ENCODE measurements at regions of chr1 and their contacts with region 1.

Region 1: GRCh38 chr1:202810615-202811295 is at the start of gene PCAT6:
- DNase-seq: peak; percentile 92 to 96 (median 95)
- H3K4me3 ChIP-seq: peak within 1 kb of the TSS; percentile 57 to 99 (median 87)
- H3K27ac ChIP-seq: peak within 1 kb of the TSS in 58 of 59 donors; percentile 5 to 94 (median 81)
- H3K27me3 ChIP-seq: no peaks in the 10 kb centered on the region
- CTCF ChIP-seq: peak in 26 of 56 donors; percentile 6 to 53 (median 21)
- total RNA-seq, gene PCAT6: 0.81 to 10.0 (median 2.3) TPM in 113 of 120 experiments, not detected in the others

Region 2: DNA sequence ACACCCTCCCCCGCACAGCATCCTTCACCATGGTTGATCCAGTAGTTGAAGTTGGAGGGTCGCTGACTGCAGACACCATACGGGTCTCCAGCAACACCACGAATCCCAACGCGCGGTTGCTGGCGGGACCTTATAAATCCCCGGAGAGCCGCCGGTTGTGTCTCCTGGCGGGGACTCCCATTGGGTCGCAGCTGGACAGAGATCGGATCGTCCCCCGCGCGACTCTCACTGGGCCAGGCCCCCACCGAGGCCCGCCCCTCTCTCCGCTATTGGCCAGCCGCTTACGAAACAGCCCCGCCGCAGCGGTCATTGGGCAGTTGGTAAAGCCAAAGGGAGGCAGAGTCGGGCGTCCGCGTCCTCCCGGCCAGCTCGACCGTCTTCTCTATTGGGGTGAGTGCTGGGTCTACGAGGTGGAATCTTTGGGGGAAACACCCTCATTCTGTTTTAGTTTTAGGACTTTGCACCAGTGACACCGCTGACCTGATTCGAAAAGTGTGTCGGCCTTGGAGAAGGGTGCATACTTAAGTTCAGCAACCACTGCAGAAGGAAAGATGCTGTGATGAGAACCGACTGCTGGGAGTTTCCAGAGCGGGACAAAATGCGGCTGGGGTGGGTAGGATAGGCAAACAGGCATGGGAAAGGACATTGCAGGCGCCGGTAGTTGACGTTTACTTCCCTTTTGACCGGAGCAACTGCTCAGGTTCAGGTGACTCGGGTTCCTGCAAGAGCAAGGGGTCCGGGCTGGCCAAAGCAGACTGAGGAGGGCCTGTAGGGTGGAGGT is 50.9 kb after region 1 on chr1:
- intact Hi-C with region 1: loop called (anchors 2 to 5 kb)
- DNase-seq: peak; percentile 89 to 97 (median 94)
- H3K4me3 ChIP-seq: peak overlapping the region; percentile 61 to 92 (median 79)
- H3K27ac ChIP-seq: peak overlapping the region in 33 of 59 donors; percentile 0 to 78 (median 43)
- H3K27me3 ChIP-seq: no peaks in the 10 kb centered on the region
- CTCF ChIP-seq: peak in 22 of 56 donors; percentile 1 to 49 (median 16)

Region 3: GRCh38 chr1:202888531-202889360 is 78.0 kb after region 1 on chr1 and contains the start of gene RABIF:
- intact Hi-C with region 1: loop called (anchors 2 kb)
- DNase-seq: peak; percentile 92 to 97 (median 96)
- H3K4me3 ChIP-seq: peak within 1 kb of the TSS; percentile 55 to 98 (median 89)
- H3K27ac ChIP-seq: peak within 1 kb of the TSS; percentile 81 to 100 (median 97)
- H3K27me3 ChIP-seq: no peaks in the 10 kb centered on the region
- CTCF ChIP-seq: peak in 40 of 56 donors; percentile 7 to 58 (median 36)
- total RNA-seq, gene RABIF: 9.4 to 26.6 (median 17.3) TPM

Region 4: DNA sequence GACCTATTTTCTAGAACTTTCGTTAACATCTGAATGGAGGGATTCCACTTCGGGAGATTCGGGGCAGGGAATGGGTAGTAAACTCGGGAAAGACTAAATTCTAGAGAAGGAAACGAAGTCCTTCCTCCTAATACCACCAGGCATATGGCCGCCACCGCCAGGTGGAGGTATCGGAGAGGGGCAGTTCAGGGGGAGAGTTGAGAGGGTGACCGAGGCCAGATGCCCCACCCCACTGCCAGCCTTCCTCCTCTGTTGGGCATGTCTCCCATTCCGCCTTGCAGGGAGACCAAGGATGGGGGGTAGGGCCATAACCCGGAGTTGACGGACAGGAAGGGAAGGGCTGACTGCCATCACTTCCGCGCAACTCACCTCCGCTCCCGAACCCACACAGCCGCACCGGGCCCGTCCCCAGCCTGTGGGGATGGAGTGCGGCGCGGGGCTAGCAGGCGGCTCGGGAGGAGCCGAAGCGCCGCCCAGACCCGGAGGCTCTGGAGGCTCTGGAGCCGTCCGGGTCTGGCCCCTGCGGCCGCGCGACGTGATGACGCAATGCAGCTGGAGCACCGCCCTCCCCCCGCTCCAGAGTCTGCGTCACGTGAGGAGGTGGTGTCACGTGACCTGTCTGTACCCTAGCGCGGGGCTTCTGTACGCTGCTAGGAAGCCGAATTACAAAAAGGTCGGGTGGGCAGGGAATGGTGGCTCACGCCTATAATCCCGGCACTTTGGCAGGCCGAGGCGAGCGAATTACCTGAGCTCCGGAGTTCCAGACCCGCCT is 116.2 kb after region 1 on chr1 and contains the start of gene KLHL12:
- intact Hi-C with region 1: loop called in 1 of 2 experiments (anchors 10 kb)
- DNase-seq: peak; percentile 93 to 99 (median 96)
- H3K4me3 ChIP-seq: peak within 1 kb of the TSS; percentile 55 to 99 (median 93)
- H3K27ac ChIP-seq: peak within 1 kb of the TSS; percentile 78 to 98 (median 95)
- H3K27me3 ChIP-seq: no peaks in the 10 kb centered on the region
- CTCF ChIP-seq: peak in 54 of 56 donors; percentile 13 to 62 (median 45)
- total RNA-seq, gene KLHL12: 22.3 to 47.0 (median 36.2) TPM

Region 5: GRCh38 chr1:202968840-202969295 is 158.1 kb after region 1 on chr1:
- intact Hi-C with region 1: loop called in 1 of 2 experiments (anchors 2 kb)
- DNase-seq: peak in 2 of 10 donors; percentile 10 to 44
- H3K4me3 ChIP-seq: peak overlapping the region in 4 of 59 donors; percentile 86 to 95 (median 88)
- H3K27ac ChIP-seq: peak overlapping the region in 44 of 59 donors; percentile 5 to 96 (median 78)
- H3K27me3 ChIP-seq: no peaks in the 10 kb centered on the region
- CTCF ChIP-seq: peak in 54 of 56 donors; percentile 20 to 68 (median 54)

Region 6: GRCh38 chr1:203000226-203000944 is 189.6 kb after region 1 on chr1:
- intact Hi-C with region 1: loop called (anchors 5 to 10 kb)
- DNase-seq: no peak
- H3K4me3 ChIP-seq: no peak overlapping the region
- H3K27ac ChIP-seq: no peak overlapping the region
- H3K27me3 ChIP-seq: peaks cover 0 to 13% (median 0%) of the 10 kb centered on the region in 45 donors
- CTCF ChIP-seq: no peak

Region 7: GRCh38 chr1:203006948-203007871 is 196.5 kb after region 1 on chr1 and contains the start of gene TMEM183A:
- intact Hi-C with region 1: loop called (anchors 5 to 10 kb)
- DNase-seq: peak; percentile 94 to 98 (median 96)
- H3K4me3 ChIP-seq: peak within 1 kb of the TSS; percentile 59 to 98 (median 87)
- H3K27ac ChIP-seq: peak within 1 kb of the TSS in 58 of 59 donors; percentile 7 to 97 (median 82)
- H3K27me3 ChIP-seq: no peaks in the 10 kb centered on the region
- CTCF ChIP-seq: peak in 12 of 56 donors; percentile 9 to 45 (median 24)
- total RNA-seq, gene TMEM183A: 37.4 to 106 (median 77.4) TPM

Region 8: DNA sequence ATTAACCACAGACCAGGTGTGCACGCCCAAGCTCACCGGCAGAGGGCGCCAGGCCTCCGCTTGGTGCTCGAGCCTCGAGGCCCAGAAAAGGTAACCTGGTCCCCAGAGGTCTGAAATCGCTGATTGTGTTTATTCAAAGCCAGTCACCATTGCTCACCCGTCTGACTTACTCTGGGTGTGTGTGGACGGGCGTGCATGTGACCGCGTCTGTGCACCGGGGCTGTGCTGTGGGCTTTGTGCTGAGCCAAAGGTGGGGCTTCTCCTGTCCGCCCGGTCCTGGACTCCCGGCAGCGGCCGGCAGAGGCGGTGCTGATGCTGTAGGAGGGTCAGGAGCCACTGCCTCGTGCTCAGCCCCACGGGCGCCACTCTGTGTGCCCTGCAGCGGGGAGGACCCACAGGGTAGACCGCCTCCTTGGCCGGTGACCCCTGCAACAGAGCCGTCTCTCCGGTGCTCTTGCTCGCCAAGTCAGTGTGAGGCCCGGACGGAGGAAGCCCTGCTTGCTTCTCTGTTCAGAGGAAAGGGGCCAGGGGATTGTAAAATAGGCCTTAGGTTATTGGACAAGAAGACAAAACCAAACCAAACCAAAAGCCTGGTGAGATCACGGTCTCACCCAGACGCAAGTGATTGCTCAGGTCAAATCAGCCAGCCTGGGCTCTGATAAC is 462.6 kb after region 1 on chr1:
- intact Hi-C with region 1: no loop called
- DNase-seq: peak; percentile 84 to 93 (median 90)
- H3K4me3 ChIP-seq: peak overlapping the region in 58 of 59 donors; percentile 5 to 61 (median 41)
- H3K27ac ChIP-seq: peak overlapping the region; percentile 71 to 99 (median 98)
- H3K27me3 ChIP-seq: no peaks in the 10 kb centered on the region
- CTCF ChIP-seq: peak; percentile 95 to 100 (median 99)

Measured in dorsolateral prefrontal cortex (tissue), 120 donors.